ENCODE measurements at regions of chr1 and their contacts with region 1.

Region 1: DNA sequence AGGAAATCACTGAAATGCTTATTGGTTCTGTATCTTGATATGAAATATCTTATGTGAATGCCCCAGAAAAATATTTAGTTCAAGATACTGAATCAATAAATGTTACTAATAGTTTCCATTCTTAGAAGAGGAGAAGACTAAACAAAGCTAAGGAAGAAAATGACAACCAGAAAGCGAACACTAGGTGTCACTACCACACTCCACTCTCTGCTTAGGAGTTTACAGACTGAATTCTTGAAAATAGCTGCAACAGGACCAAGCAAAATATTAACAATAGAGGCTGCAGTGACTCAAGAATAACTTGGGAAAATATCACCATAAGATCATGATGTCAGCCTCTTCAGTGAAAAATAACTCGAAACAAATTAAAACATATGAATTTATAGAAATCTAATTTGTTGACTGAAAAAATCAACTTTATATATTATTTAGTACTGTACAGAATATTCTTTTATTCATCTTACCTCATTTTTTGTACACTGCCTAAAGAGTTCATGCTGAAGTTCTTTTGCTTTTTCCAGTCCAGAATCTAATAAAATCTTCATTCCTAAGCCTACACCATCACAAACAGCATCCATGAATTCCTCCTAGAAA is 61.6 kb downstream of the KIF14 start:
- DNase-seq: peak in 1 of 2 experiments; percentile 43
- H3K4me3 ChIP-seq: no peak overlapping the region
- H3K27ac ChIP-seq: no peak overlapping the region
- H3K4me1 ChIP-seq: no peaks in the 10 kb centered on the region
- H3K27me3 ChIP-seq: no peaks in the 10 kb centered on the region
- CTCF ChIP-seq: peak; percentile 71

Region 2: DNA sequence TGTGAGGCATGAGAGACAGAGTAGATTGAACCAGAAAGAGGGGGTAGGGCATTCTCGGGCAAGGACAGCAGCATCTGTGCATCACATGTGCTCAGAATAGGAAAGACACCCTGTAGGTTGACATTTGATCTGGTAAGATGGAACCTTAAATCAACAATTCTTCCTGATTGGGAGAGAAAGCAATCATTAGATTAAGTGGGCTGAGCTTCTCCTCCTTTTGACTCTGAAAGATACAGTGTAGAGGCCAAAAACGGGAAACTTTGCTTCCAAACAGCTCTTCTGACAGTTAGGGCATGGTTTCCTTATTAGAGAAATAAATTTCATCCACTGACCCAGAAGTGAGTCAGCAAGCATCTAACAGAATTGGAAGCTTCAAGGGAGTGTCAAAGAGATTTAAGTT is 51.9 kb after region 1 on chr1:
- CTCF ChIA-PET with region 1: no interaction called
- POLR2A ChIA-PET with region 1: no interaction called
- intact Hi-C with region 1: loop called (anchors 5 kb)
- DNase-seq: no peak
- H3K4me3 ChIP-seq: no peak overlapping the region
- H3K27ac ChIP-seq: no peak overlapping the region
- H3K4me1 ChIP-seq: no peaks in the 10 kb centered on the region
- H3K27me3 ChIP-seq: no peaks in the 10 kb centered on the region
- CTCF ChIP-seq: no peak